A673 (cell line): ENCODE measurements at regions of chr7 and their contacts with region 1.

Region 1: GRCh38 chr7:80134536-80135320 is at the start of gene GNAI1:
- DNase-seq: peak; percentile 84
- H3K4me3 ChIP-seq: peak within 1 kb of the TSS; percentile 89
- H3K27ac ChIP-seq: peak within 1 kb of the TSS; percentile 86
- H3K4me1 ChIP-seq: peaks cover 30% of the 10 kb centered on the region
- H3K27me3 ChIP-seq: no peaks in the 10 kb centered on the region
- CTCF ChIP-seq: peak; percentile 52
- total RNA-seq, gene GNAI1: 19.8 and 22.4 TPM in 2 replicates

Region 2: DNA sequence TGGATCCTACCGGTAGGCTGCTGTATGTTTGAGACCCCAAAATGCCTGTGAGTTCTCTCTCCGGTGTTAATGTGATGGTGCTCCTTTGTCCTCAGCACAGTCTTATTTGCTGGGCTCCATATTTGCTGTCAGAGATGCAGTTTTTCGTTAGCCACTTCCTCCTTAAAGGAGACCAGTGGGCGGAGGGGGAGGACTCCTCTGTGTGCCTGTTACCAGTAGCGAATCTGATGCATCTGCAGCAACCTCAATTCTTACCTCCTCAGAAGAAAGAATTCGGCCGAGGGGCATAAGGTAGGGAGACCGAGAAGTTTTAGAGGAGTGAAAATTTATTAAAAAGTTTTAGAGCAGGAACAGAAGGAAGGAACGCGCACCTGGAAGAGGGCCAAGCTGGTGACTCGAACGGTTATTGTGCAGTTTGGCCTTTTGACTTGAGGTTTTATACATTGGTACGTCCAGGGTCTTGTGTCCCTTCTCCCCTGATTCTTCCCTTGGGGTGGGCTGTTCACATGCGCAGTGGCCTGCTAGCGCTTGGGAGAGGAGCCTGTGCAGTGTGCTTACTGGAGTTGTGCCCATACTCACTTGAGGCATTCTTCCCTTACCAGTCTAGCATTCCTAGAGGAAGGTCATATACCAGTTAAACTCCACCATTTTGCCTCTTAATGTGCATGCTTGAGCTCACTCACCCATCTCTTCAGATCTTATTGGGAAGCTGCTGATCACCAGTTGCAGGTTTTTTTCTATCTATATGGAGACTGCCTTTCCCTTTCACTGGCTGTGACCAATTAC is 49.4 kb after region 1 on chr7:
- CTCF ChIA-PET with region 1: no interaction called
- POLR2A ChIA-PET with region 1: no interaction called
- intact Hi-C with region 1: loop called (anchors 2 kb)
- DNase-seq: no peak
- H3K4me3 ChIP-seq: no peak overlapping the region
- H3K27ac ChIP-seq: no peak overlapping the region
- H3K4me1 ChIP-seq: peaks cover 21% of the 10 kb centered on the region
- H3K27me3 ChIP-seq: no peaks in the 10 kb centered on the region
- CTCF ChIP-seq: no peak

Region 3: DNA sequence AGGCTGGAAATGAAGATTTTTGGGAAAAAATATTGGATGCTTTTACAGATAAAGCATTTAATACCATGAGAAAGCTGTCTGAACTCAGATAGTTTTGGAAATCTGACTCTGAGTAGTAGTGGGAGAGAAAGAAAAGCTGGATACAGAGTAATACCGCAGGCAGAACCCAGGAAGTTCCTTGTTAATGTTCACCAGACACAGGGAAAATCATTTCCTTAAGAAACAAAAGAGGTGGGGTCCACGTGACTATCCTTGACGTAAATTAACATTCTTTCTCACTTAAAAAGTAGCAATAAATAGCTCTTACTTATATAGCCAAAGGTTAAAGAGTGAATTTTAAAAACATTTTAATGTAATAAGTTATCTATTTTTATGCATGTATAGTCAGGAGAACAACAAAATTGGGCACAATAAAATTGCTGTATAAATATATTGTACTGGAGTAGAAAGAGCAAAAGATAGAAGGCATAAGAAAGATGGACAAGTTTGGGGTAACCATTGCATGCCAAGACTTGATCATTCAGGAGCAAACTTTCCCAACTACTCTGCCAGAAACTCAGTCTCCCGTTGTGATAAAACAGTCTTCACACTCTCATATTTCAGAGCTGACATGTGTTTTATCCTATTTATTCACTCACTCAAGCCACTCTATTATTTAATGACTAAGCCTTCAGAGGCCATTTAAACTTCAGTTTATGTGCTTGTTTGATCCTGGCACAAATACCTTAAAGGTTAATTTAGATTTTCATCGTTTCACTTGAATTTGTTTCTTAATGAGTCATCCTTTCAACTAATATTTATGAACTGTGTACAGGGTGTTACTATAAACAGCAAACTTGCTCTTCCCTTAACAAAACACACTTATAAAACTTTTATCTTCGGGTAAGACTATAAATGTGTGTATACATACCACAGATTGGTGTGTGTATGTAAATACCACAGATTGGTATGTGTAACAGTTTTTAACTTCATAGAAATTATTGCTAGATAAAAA is 143.0 kb after region 1 on chr7:
- CTCF ChIA-PET with region 1: no interaction called
- POLR2A ChIA-PET with region 1: no interaction called
- intact Hi-C with region 1: loop called (anchors 5 kb)
- DNase-seq: peak; percentile 92
- H3K4me3 ChIP-seq: peak overlapping the region; percentile 2
- H3K27ac ChIP-seq: peak overlapping the region; percentile 79
- H3K4me1 ChIP-seq: peaks cover 61% of the 10 kb centered on the region
- H3K27me3 ChIP-seq: no peaks in the 10 kb centered on the region
- CTCF ChIP-seq: no peak

Region 4: GRCh38 chr7:80392229-80393169 is 257.8 kb after region 1 on chr7:
- CTCF ChIA-PET with region 1: interaction called, 10 read pairs
- POLR2A ChIA-PET with region 1: no interaction called
- intact Hi-C with region 1: loop called (anchors 1 kb)
- DNase-seq: peak; percentile 57
- H3K4me3 ChIP-seq: no peak overlapping the region
- H3K27ac ChIP-seq: no peak overlapping the region
- H3K4me1 ChIP-seq: no peaks in the 10 kb centered on the region
- H3K27me3 ChIP-seq: no peaks in the 10 kb centered on the region
- CTCF ChIP-seq: peak; percentile 61; the same call in 1 of the 2 replicates

Region 5: GRCh38 chr7:80439894-80440821 is 305.4 kb after region 1 on chr7:
- CTCF ChIA-PET with region 1: no interaction called
- POLR2A ChIA-PET with region 1: no interaction called
- intact Hi-C with region 1: loop called (anchors 5 kb)
- DNase-seq: peak; percentile 96
- H3K4me3 ChIP-seq: no peak overlapping the region
- H3K27ac ChIP-seq: peak overlapping the region; percentile 70
- H3K4me1 ChIP-seq: peaks cover 21% of the 10 kb centered on the region
- H3K27me3 ChIP-seq: no peaks in the 10 kb centered on the region
- CTCF ChIP-seq: no peak